ENCODE measurements at regions of chr3 and their contacts with region 1.

Region 1: GRCh38 chr3:42443819-42444436 is 33.5 kb upstream of the LYZL4 start:
- DNase-seq: peak; percentile 67 to 91 (median 72)
- ATAC-seq: peak; percentile 82
- H3K4me3 ChIP-seq: no peak overlapping the region
- H3K4me3 Mint-ChIP-seq: no peak overlapping the region
- H3K27ac ChIP-seq: no peak overlapping the region
- H3K27ac Mint-ChIP-seq: no peak overlapping the region
- H3K4me1 ChIP-seq: no peaks in the 10 kb centered on the region
- H3K4me1 Mint-ChIP-seq: no peaks in the 10 kb centered on the region
- H3K27me3 ChIP-seq: no peaks in the 10 kb centered on the region
- H3K27me3 Mint-ChIP-seq: peaks cover 6% of the 10 kb centered on the region
- CTCF ChIP-seq: peak; percentile 95

Region 2: GRCh38 chr3:41893977-41894376 is 550.0 kb before region 1 on chr3:
- CTCF ChIA-PET with region 1: no interaction called
- POLR2A ChIA-PET with region 1: no interaction called
- intact Hi-C with region 1: loop called in 1 of 2 experiments (anchors 2 kb)
- DNase-seq: peak in 2 of 9 experiments; percentile 48 to 58
- ATAC-seq: no peak
- H3K4me3 ChIP-seq: no peak overlapping the region
- H3K4me3 Mint-ChIP-seq: no peak overlapping the region
- H3K27ac ChIP-seq: no peak overlapping the region
- H3K27ac Mint-ChIP-seq: no peak overlapping the region
- H3K4me1 ChIP-seq: no peaks in the 10 kb centered on the region
- H3K4me1 Mint-ChIP-seq: no peaks in the 10 kb centered on the region
- H3K27me3 ChIP-seq: no peaks in the 10 kb centered on the region
- H3K27me3 Mint-ChIP-seq: no peaks in the 10 kb centered on the region
- CTCF ChIP-seq: peak; percentile 52

Region 3: GRCh38 chr3:42118762-42119361 is 325.1 kb before region 1 on chr3:
- CTCF ChIA-PET with region 1: interaction called, 6 read pairs
- POLR2A ChIA-PET with region 1: no interaction called
- intact Hi-C with region 1: loop called (anchors 5 kb)
- DNase-seq: peak in 2 of 9 experiments; percentile 31 to 49
- ATAC-seq: no peak
- H3K4me3 ChIP-seq: no peak overlapping the region
- H3K4me3 Mint-ChIP-seq: no peak overlapping the region
- H3K27ac ChIP-seq: no peak overlapping the region
- H3K27ac Mint-ChIP-seq: no peak overlapping the region
- H3K4me1 ChIP-seq: no peaks in the 10 kb centered on the region
- H3K4me1 Mint-ChIP-seq: peaks cover 18% of the 10 kb centered on the region
- H3K27me3 ChIP-seq: no peaks in the 10 kb centered on the region
- H3K27me3 Mint-ChIP-seq: no peaks in the 10 kb centered on the region
- CTCF ChIP-seq: no peak

Region 4: DNA sequence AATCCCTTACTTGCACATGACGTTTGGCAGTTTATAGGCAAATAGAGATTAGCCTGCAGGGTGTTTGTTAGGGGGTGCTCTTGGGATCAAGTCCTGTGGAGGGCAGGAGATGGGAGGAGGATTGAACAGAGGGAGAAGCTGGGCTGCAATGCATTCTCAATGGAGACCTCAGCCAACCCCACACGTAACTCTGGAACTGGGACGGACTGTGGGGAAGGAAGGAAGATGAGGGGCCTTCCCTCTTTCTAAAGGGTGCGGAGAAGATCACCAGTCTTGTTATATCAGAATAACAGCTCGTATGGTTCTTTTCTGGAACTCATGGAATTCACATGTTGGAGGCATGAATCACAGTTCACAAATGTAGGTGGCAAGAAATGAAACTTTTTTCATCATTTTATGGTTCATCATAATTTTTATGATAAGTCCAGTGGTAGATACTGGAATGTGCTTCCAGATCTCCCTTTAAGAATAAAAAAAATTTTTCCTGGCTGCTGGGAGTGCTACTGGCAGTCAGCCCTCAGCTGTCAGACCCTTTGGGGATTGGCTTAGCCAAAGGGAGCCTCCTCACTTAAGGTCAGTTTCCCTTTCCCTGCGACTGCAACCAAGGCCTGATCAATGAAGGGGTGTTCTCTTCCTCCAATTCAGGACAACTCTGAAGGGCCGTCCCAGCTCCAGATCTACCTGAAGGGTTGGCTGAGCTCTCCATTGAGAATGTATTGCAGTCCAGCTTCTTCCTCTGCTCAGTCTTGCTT is 13.0 kb before region 1 on chr3:
- CTCF ChIA-PET with region 1: interaction called, 14 read pairs
- POLR2A ChIA-PET with region 1: no interaction called
- intact Hi-C with region 1: no loop called
- DNase-seq: no peak
- ATAC-seq: no peak
- H3K4me3 ChIP-seq: no peak overlapping the region
- H3K4me3 Mint-ChIP-seq: no peak overlapping the region
- H3K27ac ChIP-seq: no peak overlapping the region
- H3K27ac Mint-ChIP-seq: no peak overlapping the region
- H3K4me1 ChIP-seq: no peaks in the 10 kb centered on the region
- H3K4me1 Mint-ChIP-seq: no peaks in the 10 kb centered on the region
- H3K27me3 ChIP-seq: no peaks in the 10 kb centered on the region
- H3K27me3 Mint-ChIP-seq: peaks cover 42% of the 10 kb centered on the region
- CTCF ChIP-seq: no peak